ENCODE measurements at regions of chr19 and their contacts with region 1.

Region 1: GRCh38 chr19:23686621-23687423 is at the start of gene ZNF675:
- DNase-seq: peak; percentile 84
- H3K4me3 Mint-ChIP-seq: peak within 1 kb of the TSS; percentile 91
- H3K27ac Mint-ChIP-seq: peak within 1 kb of the TSS; percentile 96
- H3K4me1 Mint-ChIP-seq: peaks cover 4% of the 10 kb centered on the region
- H3K27me3 Mint-ChIP-seq: no peaks in the 10 kb centered on the region
- total RNA-seq, gene ZNF675: 17.1 and 17.7 TPM in 2 replicates

Region 2: GRCh38 chr19:23249911-23250649 is 436.7 kb before region 1 on chr19 and contains the start of gene ZNF724:
- intact Hi-C with region 1: loop called (anchors 1 kb)
- DNase-seq: peak; percentile 89
- H3K4me3 Mint-ChIP-seq: peak within 1 kb of the TSS; percentile 97
- H3K27ac Mint-ChIP-seq: peak within 1 kb of the TSS; percentile 97
- H3K4me1 Mint-ChIP-seq: peaks cover 1% of the 10 kb centered on the region
- H3K27me3 Mint-ChIP-seq: no peaks in the 10 kb centered on the region
- total RNA-seq, gene ZNF724: 12.1 TPM in 2 replicates

Region 3: DNA sequence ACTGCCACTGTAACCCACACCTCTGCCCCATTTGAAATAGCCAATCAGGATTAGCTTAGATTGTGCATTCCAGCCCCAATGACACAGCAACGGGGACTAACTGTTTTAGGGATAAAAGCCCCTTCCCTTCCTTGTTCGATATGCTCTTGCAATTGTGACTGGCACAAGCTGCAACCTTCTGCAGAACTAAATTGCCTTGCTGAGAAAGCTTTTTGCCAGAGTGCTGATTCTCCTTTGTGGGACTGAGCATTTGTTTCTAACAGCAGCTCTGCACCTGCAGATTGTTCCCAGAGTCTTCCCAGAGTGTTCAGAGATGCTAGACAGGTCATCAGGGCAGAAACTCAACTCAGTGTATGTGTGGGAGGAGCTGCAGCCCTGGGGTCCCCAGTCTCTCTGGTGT is 115.6 kb before region 1 on chr19:
- intact Hi-C with region 1: no loop called
- DNase-seq: no peak
- H3K4me3 Mint-ChIP-seq: no peak overlapping the region
- H3K27ac Mint-ChIP-seq: no peak overlapping the region
- H3K4me1 Mint-ChIP-seq: no peaks in the 10 kb centered on the region
- H3K27me3 Mint-ChIP-seq: no peaks in the 10 kb centered on the region